Activated CD8-positive, alpha-beta memory T cell treated with anti-CD3 and anti-CD28 coated beads, Interleukin-2, amount 10 ng/mL, durations not matched to agents 7 days and 5 days (primary cell): ENCODE measurements at regions of chr15 and their contacts with region 1.

Region 1: GRCh38 chr15:74382004-74382816 is 14.8 kb upstream of the CYP11A1 start:
- DNase-seq: peak; percentile 87
- ATAC-seq: peak; percentile 63
- H3K4me3 Mint-ChIP-seq: no peak overlapping the region
- H3K27ac Mint-ChIP-seq: peak overlapping the region; percentile 100
- H3K4me1 Mint-ChIP-seq: peaks cover 57% of the 10 kb centered on the region
- H3K27me3 Mint-ChIP-seq: no peaks in the 10 kb centered on the region

Region 2: GRCh38 chr15:74396445-74397238 is 14.4 kb after region 1 on chr15:
- CTCF ChIA-PET with region 1: interaction called, 123 read pairs
- DNase-seq: peak; percentile 56
- ATAC-seq: no peak
- H3K4me3 Mint-ChIP-seq: no peak overlapping the region
- H3K27ac Mint-ChIP-seq: peak overlapping the region; percentile 85
- H3K4me1 Mint-ChIP-seq: peaks cover 74% of the 10 kb centered on the region
- H3K27me3 Mint-ChIP-seq: no peaks in the 10 kb centered on the region

Region 3: DNA sequence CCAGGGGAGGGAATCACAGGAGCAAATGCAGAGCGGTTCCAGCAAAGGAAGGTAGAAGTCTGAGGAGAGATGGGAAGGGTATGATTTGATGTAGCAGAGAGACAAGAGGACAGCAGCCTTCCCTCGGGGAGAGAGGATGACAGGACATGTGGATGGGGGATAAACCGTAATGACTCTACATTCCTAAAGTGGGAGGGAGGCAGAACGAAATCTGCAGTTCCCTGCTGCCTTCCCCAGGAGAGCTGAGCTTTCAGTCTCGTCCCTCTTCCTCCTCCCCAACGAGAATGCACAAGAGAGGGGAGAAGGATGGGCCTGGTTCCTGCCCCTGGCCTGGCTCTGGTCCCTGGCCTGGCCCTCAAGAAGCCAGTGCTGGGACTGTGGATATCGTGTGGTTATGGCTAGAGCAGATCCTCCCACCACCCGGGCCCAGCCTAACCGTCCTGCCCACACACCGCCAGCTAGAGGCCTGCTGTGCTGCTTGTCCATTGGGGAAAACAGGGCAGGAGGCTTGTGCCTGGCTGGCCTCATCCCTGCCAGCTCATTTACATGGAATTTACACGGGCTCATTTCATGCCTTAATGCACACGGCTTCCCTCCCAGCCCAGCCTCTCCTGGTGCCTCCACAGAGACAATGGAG is 25.0 kb after region 1 on chr15:
- CTCF ChIA-PET with region 1: interaction called, 123 read pairs
- DNase-seq: no peak
- ATAC-seq: no peak
- H3K4me3 Mint-ChIP-seq: no peak overlapping the region
- H3K27ac Mint-ChIP-seq: no peak overlapping the region
- H3K4me1 Mint-ChIP-seq: peaks cover 29% of the 10 kb centered on the region
- H3K27me3 Mint-ChIP-seq: no peaks in the 10 kb centered on the region

Region 4: GRCh38 chr15:74453925-74454763 is 71.9 kb after region 1 on chr15:
- CTCF ChIA-PET with region 1: interaction called, 16 read pairs
- DNase-seq: no peak
- ATAC-seq: peak; percentile 85
- H3K4me3 Mint-ChIP-seq: no peak overlapping the region
- H3K27ac Mint-ChIP-seq: peak overlapping the region; percentile 76
- H3K4me1 Mint-ChIP-seq: peaks cover 38% of the 10 kb centered on the region
- H3K27me3 Mint-ChIP-seq: no peaks in the 10 kb centered on the region

Region 5: DNA sequence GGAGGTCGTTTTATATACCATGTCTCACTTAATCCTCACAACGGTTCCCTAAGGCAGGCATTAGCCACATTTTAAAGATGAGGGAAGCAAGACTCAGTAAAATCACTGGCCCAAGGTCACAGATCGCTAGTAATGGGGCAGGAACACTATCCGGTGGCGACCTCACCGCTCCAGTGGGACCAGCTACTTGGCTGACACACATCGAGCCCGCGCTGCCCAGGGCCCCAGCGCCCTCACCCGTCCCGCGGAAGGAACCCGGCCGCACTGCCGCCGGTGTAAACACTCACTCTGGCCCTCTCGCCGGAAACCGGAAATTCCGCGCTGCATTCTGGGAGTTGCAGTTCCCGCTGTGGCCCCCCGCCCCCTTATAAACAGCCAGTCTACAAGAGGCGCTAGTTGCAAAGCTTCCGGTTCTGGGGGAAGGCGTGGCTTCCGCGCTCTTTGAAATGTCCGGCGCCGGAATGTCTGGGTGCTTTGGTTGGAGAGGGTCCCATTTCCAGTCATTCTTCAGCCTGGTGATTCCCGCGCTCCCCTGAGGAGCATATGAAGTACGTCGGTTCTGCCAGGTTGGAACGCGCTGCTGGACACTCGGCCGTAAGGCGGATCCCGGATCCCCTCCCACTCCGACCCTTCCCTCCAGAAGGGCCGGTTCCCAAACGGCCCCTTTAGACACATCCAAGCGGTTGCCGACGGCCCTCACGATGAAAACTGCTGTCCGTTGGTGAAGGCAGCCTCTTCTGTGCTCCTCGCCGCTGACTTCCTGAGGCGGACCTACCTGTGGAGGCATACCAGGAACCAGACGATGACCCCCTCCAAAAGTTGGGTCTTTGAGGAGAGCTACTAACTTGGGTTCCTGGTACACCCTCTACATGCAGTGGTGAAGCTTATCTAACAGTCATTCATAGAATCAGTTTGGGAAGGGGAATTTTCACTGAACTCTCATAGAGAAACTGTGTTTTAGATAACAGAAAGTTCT is 78.9 kb after region 1 on chr15 and contains the start of gene UBL7:
- CTCF ChIA-PET with region 1: interaction called, 15 read pairs
- DNase-seq: peak; percentile 99
- ATAC-seq: peak; percentile 97
- H3K4me3 Mint-ChIP-seq: peak within 1 kb of the TSS; percentile 97
- H3K27ac Mint-ChIP-seq: peak within 1 kb of the TSS; percentile 94
- H3K4me1 Mint-ChIP-seq: peaks cover 55% of the 10 kb centered on the region
- H3K27me3 Mint-ChIP-seq: no peaks in the 10 kb centered on the region
- total RNA-seq, gene UBL7: 55.9 to 60.9 TPM

Region 6: DNA sequence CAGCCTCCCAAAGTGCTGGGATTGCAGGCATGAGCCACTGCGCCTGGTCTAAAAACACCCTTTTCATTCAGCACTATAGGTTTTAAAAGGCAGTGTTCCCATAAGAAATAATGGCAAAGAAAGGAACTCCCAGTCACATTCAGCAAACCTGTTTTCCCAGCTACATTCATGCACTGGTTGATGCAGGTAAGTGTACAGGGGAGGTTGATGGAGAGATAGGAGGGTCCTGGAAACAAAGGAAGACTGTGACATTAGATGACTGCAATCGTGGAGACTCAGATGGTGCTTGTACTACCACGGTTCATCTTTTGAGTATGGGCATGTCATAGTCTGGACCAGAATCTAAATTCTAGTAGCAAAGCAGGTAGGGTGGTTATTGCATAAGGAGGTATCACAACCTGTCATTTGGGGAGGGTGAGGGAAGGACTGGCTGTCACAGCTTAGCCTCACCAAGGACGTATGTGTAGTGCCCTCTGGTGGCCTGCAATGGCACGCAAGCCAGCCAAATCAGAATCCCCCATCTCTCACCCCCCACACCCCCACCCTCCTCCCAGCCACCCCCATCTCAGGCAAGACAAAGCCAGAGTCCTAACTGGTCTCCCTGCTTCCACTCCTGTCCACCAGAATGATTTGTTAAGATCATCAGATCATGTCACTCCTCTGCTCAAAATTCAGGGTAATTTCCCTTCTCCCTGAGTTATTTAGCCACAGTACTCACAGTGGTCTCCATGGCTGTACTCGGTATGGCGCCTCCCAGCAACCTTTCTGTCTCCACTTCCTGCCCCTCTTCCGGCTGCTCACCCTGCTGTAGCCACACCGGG is 107.5 kb after region 1 on chr15:
- CTCF ChIA-PET with region 1: interaction called, 30 read pairs
- DNase-seq: peak; percentile 88
- ATAC-seq: peak; percentile 92
- H3K4me3 Mint-ChIP-seq: peak overlapping the region; percentile 40
- H3K27ac Mint-ChIP-seq: peak overlapping the region; percentile 84
- H3K4me1 Mint-ChIP-seq: peaks cover 26% of the 10 kb centered on the region
- H3K27me3 Mint-ChIP-seq: no peaks in the 10 kb centered on the region